Activated CD4-positive, alpha-beta T cell treated with anti-CD3 and anti-CD28 coated beads for 36 hours (primary cell): ENCODE measurements at regions of chr15 and their contacts with region 1.

Region 1: GRCh38 chr15:42273102-42273899 is at the starts of genes GANC and TMEM87A:
- DNase-seq: peak; percentile 98
- ATAC-seq: peak; percentile 96
- H3K4me3 Mint-ChIP-seq: peak within 1 kb of the TSS; percentile 81
- H3K27ac Mint-ChIP-seq: peak within 1 kb of the TSS; percentile 98
- H3K4me1 Mint-ChIP-seq: peaks cover 43% of the 10 kb centered on the region
- H3K27me3 Mint-ChIP-seq: no peaks in the 10 kb centered on the region
- total RNA-seq, gene GANC: 24.5 to 24.8 TPM
- total RNA-seq, gene TMEM87A: 20.5 to 29.0 TPM

Region 2: GRCh38 chr15:40952901-40953712 is 1320.2 kb before region 1 on chr15 and contains the start of gene CHAC1:
- CTCF ChIA-PET with region 1: no interaction called
- POLR2A ChIA-PET with region 1: no interaction called
- intact Hi-C with region 1: loop called in 1 of 2 experiments (anchors 5 kb)
- DNase-seq: peak; percentile 99
- ATAC-seq: peak; percentile 92
- H3K4me3 Mint-ChIP-seq: peak within 1 kb of the TSS; percentile 93
- H3K27ac Mint-ChIP-seq: peak within 1 kb of the TSS; percentile 97
- H3K4me1 Mint-ChIP-seq: peaks cover 25% of the 10 kb centered on the region
- H3K27me3 Mint-ChIP-seq: peaks cover 2% of the 10 kb centered on the region
- total RNA-seq, gene CHAC1: 31.1 to 32.2 TPM

Region 3: DNA sequence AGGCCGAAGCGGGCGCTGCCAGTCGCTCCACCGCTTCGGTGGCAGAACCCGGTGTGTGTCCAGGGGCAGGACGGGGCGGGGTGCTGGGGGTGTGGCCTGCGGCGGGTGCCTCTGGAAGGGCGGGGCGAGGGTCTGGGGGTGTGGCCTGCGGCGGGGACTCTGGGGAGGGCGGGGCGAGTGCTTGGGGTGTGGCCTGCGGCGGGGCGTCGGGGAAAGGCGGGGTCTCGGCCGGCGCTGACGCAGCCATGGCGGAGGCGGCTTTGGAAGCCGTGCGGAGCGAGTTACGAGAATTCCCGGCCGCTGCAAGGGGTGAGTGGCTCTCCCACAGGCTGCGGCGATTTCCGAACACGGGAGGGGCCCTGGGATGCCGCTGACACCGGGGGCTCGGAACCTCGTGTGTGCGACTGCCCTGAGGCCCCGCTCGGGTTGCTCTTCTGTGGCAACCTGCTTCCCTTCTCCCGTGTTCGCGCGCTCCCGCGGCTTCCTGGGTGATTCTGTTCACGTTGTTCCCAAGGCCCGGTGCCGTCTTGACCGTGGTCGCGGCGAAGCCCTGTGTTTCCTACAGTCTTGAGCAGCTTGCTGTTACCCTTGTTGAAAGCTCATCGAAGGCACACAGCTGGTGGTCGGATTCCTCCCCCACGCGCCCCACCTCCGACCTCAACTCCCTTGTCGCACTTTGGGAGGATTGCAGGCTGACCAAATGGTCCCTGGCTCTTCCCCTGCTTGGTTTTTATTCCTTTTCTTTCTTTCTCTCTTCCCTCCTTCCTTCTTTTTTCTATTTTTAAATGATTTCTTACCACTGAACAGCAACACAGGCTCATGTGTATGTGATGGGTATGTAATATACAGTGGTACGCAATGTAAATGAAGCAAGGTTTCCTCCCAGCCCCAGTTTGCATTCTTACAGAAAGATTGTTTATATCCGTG is 445.2 kb before region 1 on chr15 and contains the start of gene JMJD7:
- CTCF ChIA-PET with region 1: no interaction called
- POLR2A ChIA-PET with region 1: no interaction called
- intact Hi-C with region 1: loop called in 1 of 2 experiments (anchors 5 kb)
- DNase-seq: peak; percentile 99
- ATAC-seq: peak; percentile 96
- H3K4me3 Mint-ChIP-seq: peak within 1 kb of the TSS; percentile 80
- H3K27ac Mint-ChIP-seq: peak within 1 kb of the TSS; percentile 69
- H3K4me1 Mint-ChIP-seq: peaks cover 41% of the 10 kb centered on the region
- H3K27me3 Mint-ChIP-seq: no peaks in the 10 kb centered on the region
- total RNA-seq, gene JMJD7: 17.1 to 17.6 TPM

Region 4: GRCh38 chr15:41838400-41838897 is 434.9 kb before region 1 on chr15 and contains the start of gene PLA2G4B:
- CTCF ChIA-PET with region 1: no interaction called
- POLR2A ChIA-PET with region 1: no interaction called
- intact Hi-C with region 1: no loop called
- DNase-seq: no peak
- ATAC-seq: no peak
- H3K4me3 Mint-ChIP-seq: no peak within 1 kb of the TSS
- H3K27ac Mint-ChIP-seq: no peak within 1 kb of the TSS
- H3K4me1 Mint-ChIP-seq: peaks cover 3% of the 10 kb centered on the region
- H3K27me3 Mint-ChIP-seq: no peaks in the 10 kb centered on the region
- total RNA-seq, gene PLA2G4B: 5.0 to 6.9 TPM

Region 5: DNA sequence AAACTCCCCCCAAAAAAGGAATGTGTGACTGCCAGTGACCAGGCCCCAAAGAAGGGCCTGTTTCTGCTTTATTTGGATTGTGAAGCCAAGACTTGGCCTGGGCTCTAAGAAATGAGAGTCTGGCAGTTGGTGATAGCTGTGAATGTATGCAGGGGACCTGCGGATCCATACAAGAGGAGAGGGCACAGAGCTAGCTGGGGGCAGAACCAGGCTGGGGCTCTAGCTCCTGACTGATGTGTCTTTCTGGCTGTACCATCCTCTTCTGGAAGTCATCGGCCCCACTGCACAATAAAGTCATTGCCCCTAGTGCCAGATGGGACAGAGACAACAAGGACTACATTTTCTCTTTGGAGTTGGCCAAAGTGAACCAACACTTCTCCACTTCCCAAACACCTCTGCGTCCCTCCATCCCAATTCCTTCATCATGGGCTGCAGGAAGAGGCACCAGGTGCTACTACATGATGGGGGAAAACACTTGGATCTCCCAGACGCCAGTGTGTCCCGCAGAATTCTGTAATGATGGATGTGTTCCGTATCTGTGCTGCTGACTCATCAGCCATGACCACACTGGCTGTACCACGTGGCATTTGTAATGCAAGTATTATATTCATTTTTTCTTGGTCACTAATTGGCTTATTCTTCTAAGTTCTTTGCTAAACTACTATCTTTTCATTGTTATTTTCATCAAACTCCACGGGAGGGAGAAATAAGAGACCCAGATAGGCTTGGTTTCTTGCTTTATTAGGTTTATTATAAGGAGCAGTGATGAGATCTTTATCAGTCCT is 115.1 kb before region 1 on chr15:
- CTCF ChIA-PET with region 1: no interaction called
- POLR2A ChIA-PET with region 1: no interaction called
- intact Hi-C with region 1: no loop called
- DNase-seq: no peak
- ATAC-seq: no peak
- H3K4me3 Mint-ChIP-seq: no peak overlapping the region
- H3K27ac Mint-ChIP-seq: peak overlapping the region; percentile 17
- H3K4me1 Mint-ChIP-seq: no peaks in the 10 kb centered on the region
- H3K27me3 Mint-ChIP-seq: no peaks in the 10 kb centered on the region

Region 6: DNA sequence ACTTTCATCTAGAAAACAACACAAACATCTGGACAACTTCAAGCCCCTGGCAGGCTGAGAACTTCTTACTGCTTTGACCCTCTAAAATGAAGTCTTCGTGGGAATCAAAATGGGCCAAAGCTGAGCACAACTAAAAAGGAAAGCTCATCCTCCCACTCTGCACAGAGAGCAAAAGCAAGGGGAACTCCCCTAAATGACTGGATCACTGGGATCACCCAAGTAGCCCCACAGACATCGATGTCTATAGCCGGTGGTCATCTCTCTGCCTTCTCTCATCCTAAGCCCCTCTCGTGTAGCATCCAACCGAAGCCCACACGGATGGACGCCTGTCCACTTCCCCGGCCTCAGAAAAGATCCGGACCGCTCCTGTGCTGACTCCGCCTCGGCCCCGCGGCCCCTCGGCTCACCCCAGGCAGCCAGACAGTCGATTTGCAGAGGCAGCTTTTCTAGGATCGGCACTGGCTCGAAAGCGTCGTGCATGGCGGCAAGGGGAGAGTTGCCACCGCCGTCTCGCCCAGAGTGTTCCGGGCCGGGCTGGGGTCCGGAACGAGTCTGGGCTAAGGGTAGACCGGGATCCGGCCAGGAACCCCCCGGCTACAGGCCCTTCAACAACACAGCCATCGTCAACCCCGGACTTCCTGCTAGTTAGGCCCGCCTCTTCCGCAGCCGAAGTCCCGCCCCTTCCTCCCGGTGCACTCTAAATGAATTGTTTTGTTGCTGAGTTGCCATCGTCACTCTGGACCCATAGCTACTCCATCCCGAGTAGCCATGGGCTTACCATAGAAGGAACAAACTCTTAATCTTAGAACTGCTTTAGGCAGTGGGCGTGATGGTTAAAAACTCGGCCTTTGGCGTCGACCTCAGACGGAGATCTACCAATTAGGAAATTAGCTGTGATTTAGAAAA is 65.4 kb before region 1 on chr15 and contains the start of gene VPS39:
- CTCF ChIA-PET with region 1: no interaction called
- POLR2A ChIA-PET with region 1: interaction called, 3 read pairs
- intact Hi-C with region 1: loop called (anchors 1 to 2 kb)
- DNase-seq: peak; percentile 91
- ATAC-seq: peak; percentile 98
- H3K4me3 Mint-ChIP-seq: peak within 1 kb of the TSS; percentile 99
- H3K27ac Mint-ChIP-seq: peak within 1 kb of the TSS; percentile 97
- H3K4me1 Mint-ChIP-seq: peaks cover 32% of the 10 kb centered on the region
- H3K27me3 Mint-ChIP-seq: no peaks in the 10 kb centered on the region
- total RNA-seq, gene VPS39: 49.5 to 56.2 TPM

Region 7: GRCh38 chr15:42548253-42549031 is 275.1 kb after region 1 on chr15 and contains the starts of genes HAUS2 and LRRC57:
- CTCF ChIA-PET with region 1: no interaction called
- POLR2A ChIA-PET with region 1: no interaction called
- intact Hi-C with region 1: loop called in 1 of 2 experiments (anchors 2 kb)
- DNase-seq: peak; percentile 93
- ATAC-seq: peak; percentile 89
- H3K4me3 Mint-ChIP-seq: peak within 1 kb of the TSS; percentile 96
- H3K27ac Mint-ChIP-seq: peak within 1 kb of the TSS; percentile 96
- H3K4me1 Mint-ChIP-seq: peaks cover 51% of the 10 kb centered on the region
- H3K27me3 Mint-ChIP-seq: no peaks in the 10 kb centered on the region
- total RNA-seq, gene HAUS2: 46.1 to 55.1 TPM
- total RNA-seq, gene LRRC57: 14.8 to 15.2 TPM

Region 8: DNA sequence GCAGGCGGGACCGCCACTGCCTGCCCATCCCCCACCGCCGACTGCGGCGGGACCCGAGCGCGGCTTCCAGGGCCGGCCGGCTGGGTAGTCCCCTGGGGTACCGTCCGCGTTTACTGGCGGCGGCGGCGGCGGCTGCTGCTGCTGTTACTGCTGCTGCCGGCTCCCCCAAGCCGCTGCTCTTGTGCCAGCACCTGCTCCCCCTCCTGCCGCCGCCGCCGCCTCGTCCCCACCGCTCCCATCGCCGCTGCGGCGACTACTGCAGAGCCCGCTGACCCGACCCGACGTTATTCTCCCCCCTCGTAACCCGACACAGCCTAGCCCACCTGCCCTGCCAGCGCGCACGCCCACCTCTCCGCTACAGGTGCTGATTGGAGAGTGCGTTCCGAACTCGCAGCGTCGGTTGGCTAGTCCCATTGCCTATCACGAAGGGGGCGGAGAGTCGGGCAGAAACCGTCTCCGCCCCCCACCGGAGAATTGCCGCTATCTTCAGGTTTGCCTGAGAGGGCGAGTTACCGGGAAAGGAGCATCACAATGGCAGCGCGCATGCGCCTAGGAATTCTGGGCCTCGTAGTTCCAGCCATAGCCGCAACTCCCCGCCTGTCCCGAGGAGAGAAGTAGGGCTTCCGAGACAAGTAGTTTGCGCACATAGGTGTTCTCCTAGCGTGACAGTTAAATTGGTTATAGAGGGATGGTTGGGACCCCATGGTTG is 647.4 kb after region 1 on chr15 and contains the start of gene TTBK2:
- CTCF ChIA-PET with region 1: no interaction called
- POLR2A ChIA-PET with region 1: no interaction called
- intact Hi-C with region 1: loop called (anchors 1 to 5 kb)
- DNase-seq: peak; percentile 98
- ATAC-seq: peak; percentile 95
- H3K4me3 Mint-ChIP-seq: peak within 1 kb of the TSS; percentile 96
- H3K27ac Mint-ChIP-seq: peak within 1 kb of the TSS; percentile 96
- H3K4me1 Mint-ChIP-seq: peaks cover 26% of the 10 kb centered on the region
- H3K27me3 Mint-ChIP-seq: no peaks in the 10 kb centered on the region
- total RNA-seq, gene TTBK2: 9.7 to 10.5 TPM